CD8-positive, alpha-beta T cell (primary cell): ENCODE measurements at regions of chr14 and their contacts with region 1.

Region 1: GRCh38 chr14:99230208-99231151 is 41.5 kb downstream of the BCL11B start:
- DNase-seq: peak; percentile 73 to 95 (median 85)
- ATAC-seq: peak; percentile 62
- H3K4me3 ChIP-seq: peak overlapping the region; percentile 16 to 23
- H3K4me3 Mint-ChIP-seq: peak overlapping the region; percentile 75
- H3K27ac ChIP-seq: peak overlapping the region; percentile 60 to 96
- H3K27ac Mint-ChIP-seq: peak overlapping the region; percentile 99
- H3K4me1 ChIP-seq: peaks cover 99% of the 10 kb centered on the region
- H3K4me1 Mint-ChIP-seq: peaks cover 95% of the 10 kb centered on the region
- H3K27me3 ChIP-seq: no peaks in the 10 kb centered on the region
- H3K27me3 Mint-ChIP-seq: no peaks in the 10 kb centered on the region
- CTCF ChIP-seq: peak; percentile 46

Region 2: GRCh38 chr14:99215277-99215676 is 15.2 kb before region 1 on chr14:
- CTCF ChIA-PET with region 1: interaction called, 19 read pairs
- POLR2A ChIA-PET with region 1: interaction called, 2,179 read pairs
- intact Hi-C with region 1: loop called in 1 of 2 experiments (anchors 1 kb)
- DNase-seq: no peak
- ATAC-seq: no peak
- H3K4me3 ChIP-seq: peak overlapping the region; percentile 11 to 13
- H3K4me3 Mint-ChIP-seq: peak overlapping the region; percentile 78
- H3K27ac ChIP-seq: peak overlapping the region; percentile 2 to 50
- H3K27ac Mint-ChIP-seq: peak overlapping the region; percentile 99
- H3K4me1 ChIP-seq: peaks cover 94% of the 10 kb centered on the region
- H3K4me1 Mint-ChIP-seq: peaks cover 94% of the 10 kb centered on the region
- H3K27me3 ChIP-seq: no peaks in the 10 kb centered on the region
- H3K27me3 Mint-ChIP-seq: no peaks in the 10 kb centered on the region
- CTCF ChIP-seq: no peak

Region 3: GRCh38 chr14:99252940-99253868 is 22.7 kb after region 1 on chr14:
- CTCF ChIA-PET with region 1: interaction called, 15 read pairs
- POLR2A ChIA-PET with region 1: interaction called, 2,179 read pairs
- intact Hi-C with region 1: no loop called
- DNase-seq: peak in 5 of 9 experiments; percentile 71 to 90 (median 81)
- ATAC-seq: peak; percentile 52
- H3K4me3 ChIP-seq: peak overlapping the region; percentile 21 to 31
- H3K4me3 Mint-ChIP-seq: peak overlapping the region; percentile 79
- H3K27ac ChIP-seq: peak overlapping the region; percentile 61 to 96
- H3K27ac Mint-ChIP-seq: peak overlapping the region; percentile 95
- H3K4me1 ChIP-seq: peaks cover 100% of the 10 kb centered on the region
- H3K4me1 Mint-ChIP-seq: peaks cover 98% of the 10 kb centered on the region
- H3K27me3 ChIP-seq: no peaks in the 10 kb centered on the region
- H3K27me3 Mint-ChIP-seq: no peaks in the 10 kb centered on the region
- CTCF ChIP-seq: no peak

Region 4: DNA sequence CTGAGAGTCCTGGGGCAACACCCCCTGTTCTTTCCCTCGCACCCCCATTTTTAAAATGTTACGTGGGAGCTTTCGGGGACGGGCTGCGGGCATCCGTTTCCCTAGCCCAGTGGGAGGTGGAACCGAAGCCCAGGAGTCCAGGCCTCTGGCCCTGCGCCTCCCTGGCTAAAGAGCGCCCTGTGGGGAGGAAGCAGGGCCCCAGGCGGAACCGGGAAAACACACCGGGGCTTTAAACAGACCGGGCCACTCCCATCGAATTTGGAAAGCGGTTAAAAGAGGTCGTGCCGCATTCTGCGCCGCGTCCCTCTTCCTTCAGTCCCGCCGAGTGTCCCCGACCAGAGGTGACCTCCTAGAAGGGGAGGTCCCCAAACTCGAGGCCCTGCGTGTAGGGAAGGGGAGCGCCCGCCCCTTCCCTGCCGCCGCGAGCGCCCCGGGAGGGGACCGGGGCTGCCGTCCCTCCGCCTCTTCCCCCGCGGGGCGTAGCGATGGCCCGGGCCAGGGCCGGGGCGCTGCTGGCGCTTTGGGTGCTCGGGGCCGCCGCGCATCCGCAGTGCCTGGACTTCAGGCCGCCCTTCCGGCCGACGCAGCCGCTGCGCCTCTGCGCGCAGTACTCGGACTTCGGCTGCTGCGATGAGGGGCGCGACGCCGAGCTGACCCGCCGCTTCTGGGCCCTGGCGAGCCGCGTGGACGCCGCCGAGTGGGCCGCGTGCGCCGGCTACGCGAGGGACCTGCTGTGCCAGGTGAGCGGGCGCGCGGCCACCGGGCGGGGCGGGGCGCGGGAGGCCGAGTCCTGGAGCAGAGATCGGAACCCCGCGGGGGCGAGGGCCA is 414.5 kb after region 1 on chr14 and contains the start of gene HHIPL1:
- CTCF ChIA-PET with region 1: no interaction called
- POLR2A ChIA-PET with region 1: no interaction called
- intact Hi-C with region 1: no loop called
- DNase-seq: no peak
- ATAC-seq: no peak
- H3K4me3 ChIP-seq: no peak within 1 kb of the TSS
- H3K4me3 Mint-ChIP-seq: no peak within 1 kb of the TSS
- H3K27ac ChIP-seq: no peak within 1 kb of the TSS
- H3K27ac Mint-ChIP-seq: no peak within 1 kb of the TSS
- H3K4me1 ChIP-seq: peaks cover 4% of the 10 kb centered on the region
- H3K4me1 Mint-ChIP-seq: peaks cover 4% of the 10 kb centered on the region
- H3K27me3 ChIP-seq: peaks cover 15 to 17% of the 10 kb centered on the region in 2 experiments
- H3K27me3 Mint-ChIP-seq: peaks cover 38% of the 10 kb centered on the region
- CTCF ChIP-seq: no peak
- total RNA-seq, gene HHIPL1: 0.11 TPM in 1 of 2 experiments, not detected in the other